ENCODE measurements at regions of chr7 and their contacts with region 1.

Region 1: GRCh38 chr7:149195180-149196150 is at the start of gene ZNF282:
- DNase-seq: peak; percentile 89
- ATAC-seq: peak; percentile 91
- H3K4me3 Mint-ChIP-seq: peak within 1 kb of the TSS; percentile 95
- H3K27ac Mint-ChIP-seq: peak within 1 kb of the TSS; percentile 94
- H3K4me1 Mint-ChIP-seq: peaks cover 42% of the 10 kb centered on the region
- H3K27me3 Mint-ChIP-seq: no peaks in the 10 kb centered on the region
- total RNA-seq, gene ZNF282: 41.1 to 46.3 TPM

Region 2: GRCh38 chr7:149125863-149126661 is 69.4 kb before region 1 on chr7 and contains the start of gene ZNF425:
- CTCF ChIA-PET with region 1: interaction called, 5 read pairs
- POLR2A ChIA-PET with region 1: interaction called, 3 read pairs
- intact Hi-C with region 1: loop called in 1 of 2 experiments (anchors 1 kb)
- DNase-seq: peak; percentile 96
- ATAC-seq: peak; percentile 88
- H3K4me3 Mint-ChIP-seq: peak within 1 kb of the TSS; percentile 83
- H3K27ac Mint-ChIP-seq: peak within 1 kb of the TSS; percentile 99
- H3K4me1 Mint-ChIP-seq: peaks cover 21% of the 10 kb centered on the region
- H3K27me3 Mint-ChIP-seq: no peaks in the 10 kb centered on the region
- total RNA-seq, gene ZNF425: 0.43 to 0.95 TPM

Region 3: GRCh38 chr7:149180722-149181449 is 14.6 kb before region 1 on chr7:
- CTCF ChIA-PET with region 1: interaction called, 10 read pairs
- POLR2A ChIA-PET with region 1: interaction called, 3 read pairs
- intact Hi-C with region 1: no loop called
- DNase-seq: no peak
- ATAC-seq: no peak
- H3K4me3 Mint-ChIP-seq: no peak overlapping the region
- H3K27ac Mint-ChIP-seq: no peak overlapping the region
- H3K4me1 Mint-ChIP-seq: peaks cover 2% of the 10 kb centered on the region
- H3K27me3 Mint-ChIP-seq: no peaks in the 10 kb centered on the region

Region 4: DNA sequence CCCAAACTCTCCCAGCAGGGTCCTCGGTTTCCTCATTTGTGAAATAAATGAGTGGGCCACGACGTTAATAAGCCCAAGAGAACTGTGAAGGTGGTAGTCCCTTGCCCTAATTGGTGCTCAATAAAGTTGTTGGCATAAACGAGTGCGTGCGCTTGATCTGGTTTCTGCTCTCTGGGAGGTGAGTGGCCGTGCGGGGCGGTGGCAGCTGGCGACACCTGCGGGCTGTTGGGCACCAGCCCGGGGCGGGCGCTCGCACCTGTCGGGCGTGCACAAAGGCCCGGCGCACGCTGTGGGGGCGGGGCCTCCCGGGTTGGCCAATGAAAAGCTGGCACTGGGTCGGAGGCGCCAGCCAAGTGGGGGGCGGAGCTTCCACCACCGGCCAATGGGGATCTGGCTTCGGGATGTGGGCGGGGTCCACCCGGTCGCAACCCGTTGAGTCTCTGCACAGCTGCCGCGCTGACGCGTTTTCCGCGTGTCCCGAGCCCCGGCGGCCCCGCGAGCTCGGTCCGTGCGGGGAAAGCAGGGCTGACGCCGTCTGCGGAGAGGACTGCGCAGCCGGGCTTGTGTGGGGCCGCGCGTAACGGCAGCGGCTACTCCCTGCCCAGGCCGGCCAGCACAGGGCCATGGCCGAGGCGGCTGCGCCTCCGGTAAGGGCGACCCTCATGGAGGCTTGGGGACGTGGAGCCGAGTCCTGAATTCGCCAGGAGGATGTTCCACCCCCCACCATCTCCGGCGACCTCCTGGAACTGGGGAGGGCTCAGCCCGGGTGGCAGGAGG is 89.6 kb after region 1 on chr7:
- CTCF ChIA-PET with region 1: interaction called, 12 read pairs
- POLR2A ChIA-PET with region 1: interaction called, 5 read pairs
- intact Hi-C with region 1: loop called in 1 of 2 experiments (anchors 1 kb)
- DNase-seq: peak; percentile 99
- ATAC-seq: peak; percentile 99
- H3K4me3 Mint-ChIP-seq: peak overlapping the region; percentile 84
- H3K27ac Mint-ChIP-seq: peak overlapping the region; percentile 61
- H3K4me1 Mint-ChIP-seq: peaks cover 38% of the 10 kb centered on the region
- H3K27me3 Mint-ChIP-seq: no peaks in the 10 kb centered on the region

Region 5: GRCh38 chr7:149422129-149422913 is 226.9 kb after region 1 on chr7:
- CTCF ChIA-PET with region 1: interaction called, 11 read pairs
- POLR2A ChIA-PET with region 1: no interaction called
- intact Hi-C with region 1: loop called (anchors 1 to 10 kb)
- DNase-seq: peak; percentile 84
- ATAC-seq: peak; percentile 98
- H3K4me3 Mint-ChIP-seq: peak overlapping the region; percentile 65
- H3K27ac Mint-ChIP-seq: peak overlapping the region; percentile 63
- H3K4me1 Mint-ChIP-seq: peaks cover 9% of the 10 kb centered on the region
- H3K27me3 Mint-ChIP-seq: no peaks in the 10 kb centered on the region